CD4-positive, alpha-beta T cell (primary cell): ENCODE measurements at regions of chr6 and their contacts with region 1.

Region 1: GRCh38 chr6:53322188-53323029 is 26.3 kb downstream of the ELOVL5 start:
- DNase-seq: no peak
- ATAC-seq: no peak
- H3K4me3 ChIP-seq: no peak overlapping the region
- H3K4me3 Mint-ChIP-seq: no peak overlapping the region
- H3K27ac ChIP-seq: no peak overlapping the region
- H3K27ac Mint-ChIP-seq: peak overlapping the region; percentile 61
- H3K4me1 ChIP-seq: peaks cover 32% of the 10 kb centered on the region
- H3K4me1 Mint-ChIP-seq: peaks cover 79% of the 10 kb centered on the region
- H3K27me3 ChIP-seq: no peaks in the 10 kb centered on the region
- H3K27me3 Mint-ChIP-seq: no peaks in the 10 kb centered on the region
- CTCF ChIP-seq: no peak

Region 2: DNA sequence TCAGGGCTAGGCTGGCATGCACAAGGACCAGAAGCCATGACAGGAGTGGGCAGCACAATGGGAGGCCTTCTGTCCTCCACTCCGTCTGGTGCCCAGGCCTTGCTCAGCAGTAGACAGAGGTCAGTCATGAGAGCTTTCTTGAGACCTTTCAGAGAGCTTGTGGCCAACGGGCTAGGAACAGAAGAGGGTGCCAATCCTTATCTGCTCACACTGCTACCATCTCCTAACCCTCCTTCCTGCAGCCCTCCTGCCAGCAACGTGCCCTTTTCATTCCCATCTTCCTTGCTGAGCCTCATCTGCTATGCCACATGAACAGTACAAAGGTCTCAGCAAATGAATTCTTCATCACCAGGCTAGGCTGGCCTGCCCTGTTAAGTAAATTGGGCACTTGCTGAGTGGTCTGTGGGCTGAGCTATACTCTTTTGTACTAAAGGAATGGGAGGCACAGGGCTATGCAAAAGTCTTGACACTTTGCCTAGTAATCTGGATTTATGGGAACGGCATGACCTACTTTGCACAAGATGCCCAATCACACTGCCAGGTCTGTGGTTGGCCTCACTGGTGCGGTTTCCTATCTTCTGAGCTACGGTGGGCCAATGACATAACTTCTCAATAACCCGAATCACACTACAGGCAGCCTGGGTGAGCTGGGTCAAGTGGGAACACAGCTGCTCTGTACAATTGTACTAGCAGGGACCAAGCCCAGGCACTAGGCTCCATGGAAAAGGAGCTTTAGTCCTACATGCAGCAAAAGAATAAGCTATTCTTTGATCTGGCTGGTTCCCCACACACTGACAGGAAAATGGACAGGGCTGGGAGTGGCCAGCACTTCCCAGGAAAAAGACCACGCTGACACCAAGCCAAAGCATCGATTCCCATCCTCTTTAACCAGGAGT is 21.5 kb before region 1 on chr6:
- CTCF ChIA-PET with region 1: interaction called, 3 read pairs
- POLR2A ChIA-PET with region 1: interaction called, 4 read pairs
- intact Hi-C with region 1: loop called in 1 of 2 experiments (anchors 2 kb)
- DNase-seq: peak in 8 of 14 experiments; percentile 12 to 72 (median 36)
- ATAC-seq: peak; percentile 13
- H3K4me3 ChIP-seq: peak overlapping the region; percentile 8
- H3K4me3 Mint-ChIP-seq: peak overlapping the region; percentile 35
- H3K27ac ChIP-seq: peak overlapping the region in 1 of 2 donors; percentile 51
- H3K27ac Mint-ChIP-seq: peak overlapping the region; percentile 83
- H3K4me1 ChIP-seq: peaks cover 54% of the 10 kb centered on the region
- H3K4me1 Mint-ChIP-seq: peaks cover 86% of the 10 kb centered on the region
- H3K27me3 ChIP-seq: no peaks in the 10 kb centered on the region
- H3K27me3 Mint-ChIP-seq: no peaks in the 10 kb centered on the region
- CTCF ChIP-seq: no peak